ENCODE measurements at regions of chr4 and their contacts with region 1.

Region 1: GRCh38 chr4:103032574-103032973 is 13.1 kb upstream of the SLC9B1 start:
- DNase-seq: no peak
- ATAC-seq: no peak

Region 2: GRCh38 chr4:101563126-101563525 is 1469.4 kb before region 1 on chr4:
- intact Hi-C with region 1: no loop called
- DNase-seq: no peak
- ATAC-seq: no peak

Region 3: DNA sequence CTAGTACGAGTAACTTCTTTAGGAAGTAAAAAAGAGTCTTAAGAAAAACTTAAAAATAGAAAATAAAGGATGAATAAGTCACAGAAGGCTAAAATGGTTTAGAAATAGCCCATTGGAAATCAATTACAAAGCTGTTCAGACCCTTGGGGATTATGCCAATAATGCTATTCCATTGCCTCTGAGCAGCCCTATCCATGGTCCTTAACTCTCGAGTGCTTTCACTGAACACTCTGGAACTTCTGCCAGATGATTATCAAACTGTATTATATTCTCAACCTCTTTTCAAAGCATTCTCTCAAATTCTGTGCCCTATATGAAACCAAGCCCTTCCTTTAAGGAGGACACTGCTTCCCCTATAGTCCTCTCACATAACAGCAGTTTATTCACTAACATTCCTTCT is 30.0 kb before region 1 on chr4:
- intact Hi-C with region 1: loop called (anchors 2 kb)
- DNase-seq: no peak
- ATAC-seq: no peak